ENCODE measurements at regions of chr12 and their contacts with region 1.

Region 1: GRCh38 chr12:82685790-82686167 is 927 bp upstream of the TMTC2 start:
- DNase-seq: peak; percentile 98
- H3K4me3 ChIP-seq: peak overlapping the region; percentile 98
- H3K27ac ChIP-seq: 0 out of 2 replicates have a peak overlapping the region, but pooled peaks have one; percentile 51
- H3K4me1 ChIP-seq: peaks cover 12% of the 10 kb centered on the region
- H3K27me3 ChIP-seq: peaks cover 4% of the 10 kb centered on the region; the same call in 1 of the 2 replicates

Region 2: DNA sequence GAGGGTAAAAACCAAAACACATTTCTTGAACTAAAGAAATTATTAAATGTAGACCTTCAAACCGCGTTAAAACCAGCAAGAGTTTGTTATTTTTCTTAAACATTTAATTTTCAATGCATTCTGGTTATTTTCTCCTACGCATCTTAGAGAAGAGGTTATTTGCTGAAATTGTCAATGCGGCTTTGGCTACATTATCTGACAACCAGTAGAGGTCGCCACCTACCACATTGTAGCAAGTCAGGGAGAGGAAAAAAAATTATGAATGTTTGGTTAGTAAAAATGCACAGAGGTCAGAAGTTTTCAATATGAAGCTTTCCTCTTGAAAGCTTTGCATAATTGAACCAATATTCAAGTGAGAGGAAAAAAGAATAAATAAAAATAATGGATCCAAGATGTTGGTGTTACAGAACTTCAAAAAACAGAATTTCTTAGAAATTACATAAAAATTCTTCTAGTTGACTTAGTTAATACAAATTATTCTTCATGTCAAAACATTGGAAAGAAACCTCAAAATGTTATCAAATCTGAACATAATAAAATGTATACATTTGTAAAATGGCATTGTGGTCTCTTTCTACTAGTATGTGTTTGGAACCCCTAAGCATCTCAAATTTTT is 158.5 kb before region 1 on chr12:
- in situ Hi-C with region 1: no loop called
- DNase-seq: peak; percentile 78
- H3K4me3 ChIP-seq: no peak overlapping the region
- H3K27ac ChIP-seq: no peak overlapping the region
- H3K4me1 ChIP-seq: no peaks in the 10 kb centered on the region
- H3K27me3 ChIP-seq: no peaks in the 10 kb centered on the region

Region 3: DNA sequence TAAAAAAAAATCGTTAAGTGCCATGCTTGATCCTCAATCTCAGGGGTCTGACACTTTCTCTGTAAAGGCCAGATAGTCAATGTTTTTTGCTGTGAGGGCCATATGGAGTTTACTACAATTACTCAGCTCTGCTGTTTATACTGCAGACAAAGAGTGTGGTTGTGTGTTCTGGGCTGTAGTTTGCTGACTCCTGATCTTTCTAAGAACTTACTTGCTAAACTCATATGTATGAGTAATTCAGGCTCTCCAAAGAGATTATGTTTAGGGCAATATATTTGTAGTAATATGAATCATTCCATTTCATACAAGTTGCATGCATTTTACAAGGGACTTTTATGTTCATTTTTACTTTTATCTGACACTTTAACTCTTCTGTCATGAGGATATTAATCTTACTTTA is 189.2 kb after region 1 on chr12:
- in situ Hi-C with region 1: no loop called
- DNase-seq: peak; percentile 68
- H3K4me3 ChIP-seq: no peak overlapping the region
- H3K27ac ChIP-seq: no peak overlapping the region
- H3K4me1 ChIP-seq: no peaks in the 10 kb centered on the region
- H3K27me3 ChIP-seq: no peaks in the 10 kb centered on the region

Region 4: DNA sequence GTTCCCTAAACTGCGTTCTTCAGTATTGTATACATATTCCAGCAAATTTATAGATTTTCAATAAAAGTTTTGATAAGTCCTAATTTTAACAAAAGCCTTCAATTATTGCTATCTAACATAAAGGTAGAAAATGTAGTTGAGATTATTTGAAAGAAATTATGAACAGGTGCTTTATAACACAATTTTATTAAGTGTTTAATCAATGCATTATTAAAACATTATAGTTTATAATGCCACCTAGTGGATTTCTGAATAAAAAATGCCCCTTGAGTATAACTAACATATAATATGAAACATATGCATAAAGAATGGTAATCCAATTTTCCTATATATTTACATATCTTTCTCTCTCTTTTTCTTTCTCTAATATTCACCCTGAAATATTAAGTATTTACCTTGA is 1711.5 kb after region 1 on chr12:
- in situ Hi-C with region 1: loop called (anchors 25 kb)
- DNase-seq: peak; percentile 37
- H3K4me3 ChIP-seq: no peak overlapping the region
- H3K27ac ChIP-seq: no peak overlapping the region
- H3K4me1 ChIP-seq: no peaks in the 10 kb centered on the region
- H3K27me3 ChIP-seq: no peaks in the 10 kb centered on the region

Region 5: GRCh38 chr12:84497819-84498218 is 1812.0 kb after region 1 on chr12:
- in situ Hi-C with region 1: loop called (anchors 25 kb)
- DNase-seq: peak; percentile 9
- H3K4me3 ChIP-seq: no peak overlapping the region
- H3K27ac ChIP-seq: no peak overlapping the region
- H3K4me1 ChIP-seq: no peaks in the 10 kb centered on the region
- H3K27me3 ChIP-seq: no peaks in the 10 kb centered on the region